ENCODE measurements at regions of chr16 and their contacts with region 1.

Region 1: DNA sequence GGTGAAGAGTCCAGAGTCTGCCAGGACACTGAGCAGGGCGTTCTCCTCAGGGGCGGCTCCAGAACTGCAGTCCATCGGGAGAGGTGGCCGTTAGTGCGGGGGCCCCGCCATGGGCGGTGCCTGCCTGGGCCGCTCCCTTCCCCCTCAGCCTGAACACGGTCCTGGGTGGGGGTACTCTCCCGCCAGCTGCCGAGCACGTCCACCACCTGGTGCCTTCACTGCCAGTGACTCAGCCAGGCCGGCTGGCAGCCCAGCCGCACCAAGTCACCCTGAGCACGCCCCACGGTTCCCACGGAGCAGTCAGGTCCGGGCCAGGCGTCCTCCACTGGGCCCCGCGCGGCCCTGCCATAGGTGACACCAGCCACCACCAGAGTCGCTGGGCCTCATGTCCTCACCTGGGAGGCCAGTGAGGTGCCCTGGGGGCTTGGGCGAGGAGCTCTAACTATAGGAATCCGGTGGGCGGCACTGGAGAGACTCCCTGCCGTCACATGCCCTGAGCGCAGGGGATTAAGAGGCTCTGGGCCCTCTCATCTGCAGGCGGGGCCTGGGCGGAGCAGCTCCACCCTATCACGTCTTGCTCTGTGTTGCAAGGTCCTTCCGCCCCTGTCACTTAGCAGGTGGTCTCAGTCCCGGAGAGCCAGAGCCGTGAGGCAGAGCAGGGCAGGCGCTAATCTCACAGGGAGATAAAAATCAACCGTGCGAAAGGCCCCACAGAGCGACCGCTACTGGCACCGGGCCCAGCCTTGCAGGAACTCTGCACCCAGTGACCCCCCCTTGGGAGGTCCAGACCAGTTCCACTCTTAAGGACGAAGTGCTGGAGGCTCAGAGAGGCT is 14.3 kb downstream of the PIEZO1 start:
- DNase-seq: peak; percentile 95 to 99 (median 98)
- H3K4me3 ChIP-seq: peak overlapping the region in 4 of 7 experiments; percentile 24 to 54 (median 46)
- H3K27ac ChIP-seq: peak overlapping the region; percentile 72 to 87
- H3K4me1 ChIP-seq: peaks cover 0 to 82% (median 81%) of the 10 kb centered on the region in 4 experiments
- H3K27me3 ChIP-seq: no peaks in the 10 kb centered on the region

Region 2: DNA sequence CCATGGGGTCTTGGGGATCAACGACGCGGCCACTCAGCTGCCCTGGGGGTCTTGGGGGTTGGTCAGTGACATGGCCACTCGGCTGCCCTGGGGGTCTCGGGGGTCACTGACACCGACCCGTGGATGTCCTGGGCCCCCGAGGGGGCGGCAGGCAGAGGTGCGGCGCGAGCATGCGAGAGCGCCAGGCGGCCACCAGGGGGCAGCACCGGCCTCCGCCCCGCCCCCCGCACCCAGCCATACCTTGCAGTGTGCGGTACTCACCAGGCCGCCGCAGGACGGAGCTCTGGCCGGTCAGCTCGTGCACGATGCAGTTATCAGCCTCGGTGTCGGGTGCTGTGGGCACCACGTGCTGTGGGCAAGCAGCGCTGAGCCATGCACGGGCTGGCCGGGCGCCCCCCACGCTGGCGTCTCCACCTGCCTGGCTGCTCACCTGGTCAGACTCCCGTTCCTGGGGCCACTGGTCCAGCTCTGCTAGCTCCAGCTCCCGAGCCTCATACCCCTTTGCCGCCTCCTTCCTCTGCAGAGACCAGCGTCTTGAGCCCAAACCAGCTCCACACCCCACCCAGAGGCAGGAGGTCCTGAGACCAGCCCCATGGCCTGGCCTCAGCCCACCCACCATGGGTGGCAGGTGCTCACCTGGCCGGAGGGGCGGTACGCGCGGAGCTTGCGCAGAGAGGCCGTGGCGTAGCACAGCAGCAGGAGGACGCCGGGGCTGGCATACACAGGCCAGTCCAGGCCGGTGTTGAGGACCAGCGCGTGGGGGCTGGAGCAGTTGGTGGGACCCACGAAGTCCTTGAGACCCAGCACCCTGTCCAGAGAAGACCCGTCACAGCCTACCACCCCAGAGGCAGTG is 33.2 kb before region 1 on chr16:
- CTCF ChIA-PET with region 1: interaction called, 11 read pairs
- POLR2A ChIA-PET with region 1: no interaction called
- DNase-seq: peak; percentile 67 to 80 (median 80)
- H3K4me3 ChIP-seq: no peak overlapping the region
- H3K27ac ChIP-seq: no peak overlapping the region
- H3K4me1 ChIP-seq: peaks cover 0 to 4% (median 3%) of the 10 kb centered on the region in 4 experiments
- H3K27me3 ChIP-seq: no peaks in the 10 kb centered on the region

Region 3: DNA sequence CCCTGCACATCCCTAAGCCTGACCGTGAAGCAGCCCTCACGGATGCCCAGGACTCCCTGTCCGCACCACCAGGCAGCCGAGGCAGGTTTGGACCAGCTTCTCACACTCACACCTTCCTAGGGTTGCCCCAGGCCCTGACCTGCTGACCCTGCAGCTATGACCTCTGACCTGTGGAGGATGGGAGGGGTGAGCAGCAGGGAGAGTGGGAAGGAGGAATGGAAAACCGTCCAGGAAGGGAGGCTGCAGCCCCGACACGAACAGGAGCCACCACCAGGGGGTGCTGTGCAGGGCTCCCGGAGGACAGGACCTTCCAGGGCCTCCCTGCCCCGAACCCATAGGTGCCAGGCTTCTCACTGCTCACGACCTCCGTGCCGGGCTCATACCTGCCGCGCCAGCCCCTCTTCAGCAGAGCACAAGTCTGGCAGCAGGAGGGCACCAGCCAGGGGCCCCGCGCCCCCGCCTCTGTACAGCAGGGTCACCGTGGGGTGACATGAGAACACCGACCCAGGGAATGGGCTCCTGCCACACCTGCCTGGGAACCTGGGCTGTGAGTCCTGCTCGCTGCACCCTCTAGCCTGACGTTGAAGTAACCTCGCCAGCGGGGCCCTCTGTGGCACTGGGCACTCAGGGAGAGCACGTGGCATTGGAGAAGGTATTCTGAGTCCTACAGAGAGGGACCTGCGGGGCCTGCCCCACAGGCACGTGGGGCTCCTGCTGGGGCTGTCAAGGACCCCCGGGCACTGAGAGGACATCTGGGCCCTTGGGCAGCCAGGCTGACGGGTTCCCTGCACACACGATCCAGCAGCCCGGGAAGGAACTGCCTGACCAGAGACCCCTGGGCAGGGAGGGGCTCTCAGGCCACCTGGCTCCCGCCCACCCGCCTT is 26.7 kb before region 1 on chr16:
- CTCF ChIA-PET with region 1: interaction called, 31 read pairs
- POLR2A ChIA-PET with region 1: no interaction called
- DNase-seq: peak; percentile 47 to 70 (median 63)
- H3K4me3 ChIP-seq: no peak overlapping the region
- H3K27ac ChIP-seq: no peak overlapping the region
- H3K4me1 ChIP-seq: peaks cover 0 to 31% (median 26%) of the 10 kb centered on the region in 4 experiments
- H3K27me3 ChIP-seq: no peaks in the 10 kb centered on the region